Calu3 (cell line): ENCODE measurements at regions of chr5 and their contacts with region 1.

Region 1: GRCh38 chr5:55633574-55634208 is 78.4 kb downstream of the SLC38A9 start:
- DNase-seq: peak; percentile 11
- H3K4me3 Mint-ChIP-seq: peak overlapping the region; percentile 32
- H3K27ac Mint-ChIP-seq: peak overlapping the region; percentile 50
- H3K4me1 Mint-ChIP-seq: peaks cover 23% of the 10 kb centered on the region
- H3K27me3 Mint-ChIP-seq: no peaks in the 10 kb centered on the region
- CTCF ChIP-seq: no peak

Region 2: GRCh38 chr5:55407059-55407684 is 226.5 kb before region 1 on chr5:
- CTCF ChIA-PET with region 1: no interaction called
- intact Hi-C with region 1: no loop called
- DNase-seq: peak; percentile 22
- H3K4me3 Mint-ChIP-seq: no peak overlapping the region
- H3K27ac Mint-ChIP-seq: no peak overlapping the region
- H3K4me1 Mint-ChIP-seq: peaks cover 15% of the 10 kb centered on the region
- H3K27me3 Mint-ChIP-seq: no peaks in the 10 kb centered on the region
- CTCF ChIP-seq: peak; percentile 22

Region 3: DNA sequence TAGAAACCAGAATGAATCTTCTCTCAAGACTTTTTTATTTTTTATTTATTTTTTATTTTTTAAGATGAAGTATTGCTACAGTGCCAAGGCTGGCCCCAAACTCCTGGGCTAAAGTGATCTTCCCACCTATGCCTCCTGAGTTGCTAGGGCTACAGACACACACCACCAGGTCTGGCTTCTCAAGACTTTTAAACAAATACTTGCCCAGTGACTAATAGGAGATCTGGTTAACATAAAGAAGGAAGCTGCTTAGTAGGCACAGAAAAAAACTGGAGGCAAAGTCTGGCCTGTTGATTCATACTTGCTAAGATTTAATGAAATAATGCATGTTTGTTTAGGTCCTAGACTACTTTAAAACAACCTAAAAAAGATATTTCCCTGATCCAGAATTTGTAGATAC is 34.7 kb after region 1 on chr5:
- CTCF ChIA-PET with region 1: no interaction called
- intact Hi-C with region 1: loop called (anchors 5 kb)
- DNase-seq: peak; percentile 17
- H3K4me3 Mint-ChIP-seq: no peak overlapping the region
- H3K27ac Mint-ChIP-seq: no peak overlapping the region
- H3K4me1 Mint-ChIP-seq: no peaks in the 10 kb centered on the region
- H3K27me3 Mint-ChIP-seq: no peaks in the 10 kb centered on the region
- CTCF ChIP-seq: no peak